Mammary epithelial cell (primary cell): ENCODE measurements at regions of chr9 and their contacts with region 1.

Region 1: GRCh38 chr9:105447814-105448812 is at the start of gene FSD1L:
- DNase-seq: peak; percentile 88
- H3K4me3 ChIP-seq: peak within 1 kb of the TSS; percentile 73 to 96 (median 93)
- H3K27ac ChIP-seq: peak within 1 kb of the TSS; percentile 78
- H3K4me1 ChIP-seq: peaks cover 11% of the 10 kb centered on the region
- H3K27me3 ChIP-seq: no peaks in the 10 kb centered on the region
- CTCF ChIP-seq: peak in 1 of 2 donors; percentile 19
- total RNA-seq, gene FSD1L: 8.9 to 10.8 TPM

Region 2: GRCh38 chr9:105557771-105558610 is 109.9 kb after region 1 on chr9 and contains the start of gene FKTN:
- CTCF ChIA-PET with region 1: no interaction called
- dilution Hi-C with region 1: no loop called
- in situ Hi-C with region 1: no loop called
- intact Hi-C with region 1: loop called (anchors 2 kb)
- DNase-seq: peak; percentile 86
- H3K4me3 ChIP-seq: peak within 1 kb of the TSS; percentile 85 to 94 (median 87)
- H3K27ac ChIP-seq: peak within 1 kb of the TSS; percentile 18
- H3K4me1 ChIP-seq: peaks cover 5% of the 10 kb centered on the region
- H3K27me3 ChIP-seq: no peaks in the 10 kb centered on the region
- CTCF ChIP-seq: no peak
- total RNA-seq, gene FKTN: 27.5 to 30.0 TPM

Region 3: GRCh38 chr9:105572455-105572854 is 124.3 kb after region 1 on chr9:
- CTCF ChIA-PET with region 1: no interaction called
- dilution Hi-C with region 1: no loop called
- in situ Hi-C with region 1: no loop called
- intact Hi-C with region 1: no loop called
- DNase-seq: no peak
- H3K4me3 ChIP-seq: no peak overlapping the region
- H3K27ac ChIP-seq: no peak overlapping the region
- H3K4me1 ChIP-seq: no peaks in the 10 kb centered on the region
- H3K27me3 ChIP-seq: no peaks in the 10 kb centered on the region
- CTCF ChIP-seq: no peak

Region 4: DNA sequence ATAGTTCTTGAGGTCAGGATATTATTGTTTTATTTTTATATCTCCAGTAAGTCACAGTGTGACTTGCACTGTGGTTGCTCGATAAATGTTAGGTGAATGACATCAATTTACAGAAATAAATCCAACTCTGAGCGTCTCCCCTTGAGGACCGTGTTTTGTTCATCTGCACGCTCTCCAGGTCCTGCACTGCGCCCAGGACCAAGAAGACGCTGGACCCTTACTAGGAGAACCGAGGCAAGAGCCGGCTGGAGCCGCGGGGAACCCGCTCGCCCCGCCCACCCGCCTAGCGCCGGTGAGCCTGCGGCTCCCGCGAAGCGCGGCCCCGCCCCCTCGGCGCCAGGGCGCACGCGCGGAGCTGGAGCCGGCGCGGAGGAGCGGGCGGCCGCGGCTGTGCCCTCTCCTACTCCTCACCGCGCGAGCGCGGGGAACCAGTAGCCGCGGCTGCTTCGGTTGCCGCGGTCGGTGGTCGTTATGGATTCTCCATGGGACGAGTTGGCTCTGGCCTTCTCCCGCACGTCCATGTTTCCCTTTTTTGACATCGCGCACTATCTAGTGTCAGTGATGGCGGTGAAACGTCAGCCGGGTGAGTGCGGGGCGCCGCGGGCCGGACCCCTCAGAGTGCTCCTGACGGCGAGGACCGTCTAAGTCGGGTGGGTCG is 246.2 kb after region 1 on chr9 and contains the start of gene TMEM38B:
- CTCF ChIA-PET with region 1: no interaction called
- dilution Hi-C with region 1: no loop called
- in situ Hi-C with region 1: no loop called
- intact Hi-C with region 1: loop called (anchors 5 kb)
- DNase-seq: peak; percentile 67
- H3K4me3 ChIP-seq: peak within 1 kb of the TSS; percentile 76 to 89 (median 87)
- H3K27ac ChIP-seq: peak within 1 kb of the TSS; percentile 14
- H3K4me1 ChIP-seq: peaks cover 8% of the 10 kb centered on the region
- H3K27me3 ChIP-seq: peaks cover 2% of the 10 kb centered on the region
- CTCF ChIP-seq: no peak
- total RNA-seq, gene TMEM38B: 10.5 to 16.8 TPM